Psoas muscle (tissue), 8 donors: ENCODE measurements at regions of chr5 and their contacts with region 1.

Region 1: GRCh38 chr5:134240421-134240962 is 14.6 kb upstream of the PPP2CA start:
- DNase-seq: no peak
- ATAC-seq: peak; percentile 41 to 71 (median 61)
- H3K4me3 ChIP-seq: peak overlapping the region; percentile 29
- H3K27ac ChIP-seq: peak overlapping the region; percentile 85
- H3K4me1 ChIP-seq: peaks cover 46% of the 10 kb centered on the region
- H3K27me3 ChIP-seq: no peaks in the 10 kb centered on the region
- CTCF ChIP-seq: no peak

Region 2: GRCh38 chr5:133287500-133287899 is 953.0 kb before region 1 on chr5:
- intact Hi-C with region 1: no loop called
- DNase-seq: peak; percentile 62 to 66
- ATAC-seq: peak; percentile 29 to 57 (median 47)
- H3K4me3 ChIP-seq: no peak overlapping the region
- H3K27ac ChIP-seq: no peak overlapping the region
- H3K4me1 ChIP-seq: peaks cover 14% of the 10 kb centered on the region
- H3K27me3 ChIP-seq: no peaks in the 10 kb centered on the region
- CTCF ChIP-seq: peak; percentile 66

Region 3: GRCh38 chr5:134225618-134226440 is 14.7 kb before region 1 on chr5 and contains the start of gene PPP2CA:
- intact Hi-C with region 1: loop called in 1 of 2 experiments (anchors 2 kb)
- DNase-seq: peak; percentile 99 to 100
- ATAC-seq: peak; percentile 90 to 94 (median 92)
- H3K4me3 ChIP-seq: peak within 1 kb of the TSS; percentile 87
- H3K27ac ChIP-seq: peak within 1 kb of the TSS; percentile 100
- H3K4me1 ChIP-seq: peaks cover 43% of the 10 kb centered on the region
- H3K27me3 ChIP-seq: no peaks in the 10 kb centered on the region
- CTCF ChIP-seq: no peak
- total RNA-seq, gene PPP2CA: 107 to 140 (median 123) TPM

Region 4: GRCh38 chr5:134275822-134276221 is 35.3 kb after region 1 on chr5:
- intact Hi-C with region 1: no loop called
- DNase-seq: no peak
- ATAC-seq: no peak
- H3K4me3 ChIP-seq: no peak overlapping the region
- H3K27ac ChIP-seq: no peak overlapping the region
- H3K4me1 ChIP-seq: no peaks in the 10 kb centered on the region
- H3K27me3 ChIP-seq: no peaks in the 10 kb centered on the region
- CTCF ChIP-seq: no peak

Region 5: GRCh38 chr5:134289509-134290113 is 49.1 kb after region 1 on chr5:
- intact Hi-C with region 1: loop called (anchors 5 kb)
- DNase-seq: peak in 1 of 2 donors; percentile 17
- ATAC-seq: peak; percentile 93 to 99 (median 98)
- H3K4me3 ChIP-seq: no peak overlapping the region
- H3K27ac ChIP-seq: no peak overlapping the region
- H3K4me1 ChIP-seq: peaks cover 5% of the 10 kb centered on the region
- H3K27me3 ChIP-seq: no peaks in the 10 kb centered on the region
- CTCF ChIP-seq: peak; percentile 84

Region 6: GRCh38 chr5:134436523-134437339 is 196.2 kb after region 1 on chr5:
- intact Hi-C with region 1: no loop called
- DNase-seq: peak; percentile 84 to 89
- ATAC-seq: peak; percentile 77 to 89 (median 81)
- H3K4me3 ChIP-seq: peak overlapping the region; percentile 42
- H3K27ac ChIP-seq: peak overlapping the region; percentile 98
- H3K4me1 ChIP-seq: peaks cover 68% of the 10 kb centered on the region
- H3K27me3 ChIP-seq: no peaks in the 10 kb centered on the region
- CTCF ChIP-seq: no peak